CD8-positive, alpha-beta T cell (primary cell): ENCODE measurements at regions of chr6 and their contacts with region 1.

Region 1: DNA sequence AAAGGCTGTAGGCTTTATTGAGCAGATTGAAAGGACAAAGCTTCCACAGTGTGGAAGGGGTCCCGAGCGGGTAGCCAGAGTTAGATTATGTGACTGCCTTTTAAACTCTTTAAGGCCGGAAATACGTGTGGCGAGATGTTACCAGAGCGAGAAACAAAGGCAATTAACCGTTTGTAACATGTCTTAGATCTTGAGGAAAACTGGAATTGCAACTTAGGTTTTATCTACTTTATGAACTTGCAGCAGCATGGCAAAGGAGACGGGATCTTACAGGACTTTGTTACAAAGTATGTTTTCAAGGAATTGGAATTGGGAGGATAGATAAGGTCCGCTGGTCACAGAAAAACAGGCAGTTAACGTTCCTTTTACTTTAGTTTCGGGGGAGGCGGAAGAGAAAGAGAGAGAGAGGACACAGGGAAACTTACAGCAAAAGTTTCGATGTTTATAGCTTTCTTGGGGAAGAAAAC is 594.7 kb upstream of the ADGRB3 start:
- DNase-seq: no peak
- ATAC-seq: no peak
- H3K4me3 ChIP-seq: no peak overlapping the region
- H3K4me3 Mint-ChIP-seq: peak overlapping the region; percentile 37
- H3K27ac ChIP-seq: no peak overlapping the region
- H3K27ac Mint-ChIP-seq: no peak overlapping the region
- H3K4me1 ChIP-seq: no peaks in the 10 kb centered on the region
- H3K4me1 Mint-ChIP-seq: no peaks in the 10 kb centered on the region
- H3K27me3 ChIP-seq: no peaks in the 10 kb centered on the region
- H3K27me3 Mint-ChIP-seq: no peaks in the 10 kb centered on the region
- CTCF ChIP-seq: no peak

Region 2: DNA sequence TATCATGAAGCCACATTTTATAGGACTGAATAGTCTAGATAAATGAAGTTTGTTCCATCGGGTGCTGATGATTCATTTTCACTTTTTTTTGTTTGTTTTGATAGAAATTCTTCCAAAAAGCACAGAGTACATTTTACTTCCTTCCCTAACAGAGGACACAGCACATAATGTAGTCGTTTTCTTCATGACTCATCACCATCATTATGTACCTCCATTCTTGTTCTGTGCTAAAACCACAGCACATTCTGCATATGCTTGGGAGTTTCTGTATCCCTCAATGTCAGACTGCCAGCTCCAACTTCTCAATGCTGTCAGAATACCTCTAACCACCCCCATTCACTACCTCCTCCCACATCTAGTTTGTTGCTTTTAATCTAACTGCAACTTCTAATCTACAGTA is 410.2 kb before region 1 on chr6:
- CTCF ChIA-PET with region 1: no interaction called
- POLR2A ChIA-PET with region 1: no interaction called
- intact Hi-C with region 1: loop called in 1 of 2 experiments (anchors 5 kb)
- DNase-seq: no peak
- ATAC-seq: no peak
- H3K4me3 ChIP-seq: no peak overlapping the region
- H3K4me3 Mint-ChIP-seq: no peak overlapping the region
- H3K27ac ChIP-seq: no peak overlapping the region
- H3K27ac Mint-ChIP-seq: no peak overlapping the region
- H3K4me1 ChIP-seq: no peaks in the 10 kb centered on the region
- H3K4me1 Mint-ChIP-seq: no peaks in the 10 kb centered on the region
- H3K27me3 ChIP-seq: no peaks in the 10 kb centered on the region
- H3K27me3 Mint-ChIP-seq: no peaks in the 10 kb centered on the region
- CTCF ChIP-seq: no peak

Region 3: GRCh38 chr6:68144667-68145066 is 104.3 kb after region 1 on chr6:
- CTCF ChIA-PET with region 1: no interaction called
- POLR2A ChIA-PET with region 1: no interaction called
- intact Hi-C with region 1: no loop called
- DNase-seq: no peak
- ATAC-seq: no peak
- H3K4me3 ChIP-seq: no peak overlapping the region
- H3K4me3 Mint-ChIP-seq: no peak overlapping the region
- H3K27ac ChIP-seq: no peak overlapping the region
- H3K27ac Mint-ChIP-seq: no peak overlapping the region
- H3K4me1 ChIP-seq: no peaks in the 10 kb centered on the region
- H3K4me1 Mint-ChIP-seq: no peaks in the 10 kb centered on the region
- H3K27me3 ChIP-seq: no peaks in the 10 kb centered on the region
- H3K27me3 Mint-ChIP-seq: no peaks in the 10 kb centered on the region
- CTCF ChIP-seq: no peak